H1 (cell line): ENCODE measurements at regions of chr12 and their contacts with region 1.

Region 1: GRCh38 chr12:99157946-99158345 is 489.6 kb upstream of the GARIN6 start:
- DNase-seq: no peak
- H3K4me3 ChIP-seq: no peak overlapping the region
- H3K27ac ChIP-seq: no peak overlapping the region
- H3K4me1 ChIP-seq: peaks cover 2 to 6% (median 5%) of the 10 kb centered on the region in 4 experiments; a peak in 3 of 7 replicates
- H3K27me3 ChIP-seq: no peaks in the 10 kb centered on the region
- CTCF ChIP-seq: no peak
- EP300 ChIP-seq: no peak
- POLR2A ChIP-seq: no peak
- RAD21 ChIP-seq: no peak

Region 2: DNA sequence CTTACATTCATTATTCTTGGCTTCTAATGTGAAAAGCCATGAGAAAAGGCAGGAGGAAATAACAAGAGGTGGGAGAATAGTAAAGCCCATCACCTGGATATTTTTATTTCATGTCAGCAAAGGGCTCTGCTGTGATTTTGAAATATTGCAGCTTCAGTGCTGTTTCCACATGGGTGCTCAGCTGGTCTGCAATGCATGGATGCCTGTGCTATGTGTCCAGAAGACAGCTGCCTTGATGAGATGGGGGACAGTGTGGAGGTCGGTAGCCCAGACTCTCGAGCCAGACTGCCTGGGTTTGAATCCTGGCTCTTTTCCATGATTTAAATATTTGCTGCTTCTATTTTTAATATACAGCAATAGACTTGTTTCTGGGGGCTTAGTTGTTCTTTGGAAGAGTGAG is 12.1 kb after region 1 on chr12:
- CTCF ChIA-PET with region 1: interaction called, 11 read pairs
- POLR2A ChIA-PET with region 1: no interaction called
- DNase-seq: no peak
- H3K4me3 ChIP-seq: no peak overlapping the region
- H3K27ac ChIP-seq: no peak overlapping the region
- H3K4me1 ChIP-seq: no peaks in the 10 kb centered on the region; a peak in 1 of 7 replicates
- H3K27me3 ChIP-seq: no peaks in the 10 kb centered on the region
- CTCF ChIP-seq: no peak
- EP300 ChIP-seq: no peak
- POLR2A ChIP-seq: no peak
- RAD21 ChIP-seq: no peak